Psoas muscle (tissue), 8 donors: ENCODE measurements at regions of chr6 and their contacts with region 1.

Region 1: GRCh38 chr6:56708810-56709597 is 66.3 kb upstream of the DST start:
- DNase-seq: no peak
- ATAC-seq: peak in 2 of 4 donors; percentile 25 to 51
- H3K4me3 ChIP-seq: no peak overlapping the region
- H3K27ac ChIP-seq: peak overlapping the region; percentile 38
- H3K4me1 ChIP-seq: peaks cover 40% of the 10 kb centered on the region
- H3K27me3 ChIP-seq: no peaks in the 10 kb centered on the region
- CTCF ChIP-seq: peak; percentile 70

Region 2: DNA sequence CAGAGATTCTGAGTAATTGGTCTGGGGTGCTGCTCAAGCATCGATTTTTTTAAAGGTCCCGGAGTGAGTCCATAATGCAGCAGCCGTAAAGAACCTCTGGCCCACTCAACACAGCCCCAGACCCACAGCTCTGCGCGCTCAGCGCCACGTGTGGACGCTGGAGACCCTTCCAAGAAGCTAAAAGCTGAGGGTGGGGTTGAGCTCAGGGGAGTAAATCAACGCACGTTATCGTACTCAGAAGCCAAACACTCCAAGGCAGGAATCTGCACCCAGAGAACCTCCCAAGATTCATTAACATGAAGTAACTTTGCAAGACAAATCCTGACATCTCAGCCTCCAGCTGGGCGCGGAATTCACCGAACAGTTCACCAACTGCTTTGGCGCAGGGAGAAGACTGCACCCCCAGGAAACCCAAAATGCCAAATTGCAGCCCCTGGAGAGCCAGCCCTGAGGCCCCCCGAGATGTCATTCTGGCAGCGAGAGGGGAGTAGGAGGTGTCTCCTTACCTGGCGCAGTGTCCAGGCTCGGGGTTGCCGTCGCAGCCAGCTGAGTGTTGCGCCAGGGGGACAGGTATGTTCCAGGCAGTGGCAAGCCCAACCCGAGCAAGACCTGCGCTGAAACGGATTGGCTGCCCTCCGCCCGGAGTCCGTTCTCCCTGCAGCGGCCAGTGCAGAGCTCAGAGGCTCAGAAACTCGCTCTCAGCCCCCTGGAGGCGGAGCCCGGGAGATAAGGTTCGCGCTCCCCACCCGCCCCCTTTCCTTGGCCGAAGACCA is 461.9 kb before region 1 on chr6 and contains the start of gene COL21A1:
- intact Hi-C with region 1: no loop called
- DNase-seq: peak; percentile 41 to 58
- ATAC-seq: peak; percentile 53 to 85 (median 82)
- H3K4me3 ChIP-seq: peak within 1 kb of the TSS; percentile 63
- H3K27ac ChIP-seq: no peak within 1 kb of the TSS
- H3K4me1 ChIP-seq: no peaks in the 10 kb centered on the region
- H3K27me3 ChIP-seq: no peaks in the 10 kb centered on the region
- CTCF ChIP-seq: no peak
- total RNA-seq, gene COL21A1: 0.47 to 7.1 (median 1.0) TPM

Region 3: DNA sequence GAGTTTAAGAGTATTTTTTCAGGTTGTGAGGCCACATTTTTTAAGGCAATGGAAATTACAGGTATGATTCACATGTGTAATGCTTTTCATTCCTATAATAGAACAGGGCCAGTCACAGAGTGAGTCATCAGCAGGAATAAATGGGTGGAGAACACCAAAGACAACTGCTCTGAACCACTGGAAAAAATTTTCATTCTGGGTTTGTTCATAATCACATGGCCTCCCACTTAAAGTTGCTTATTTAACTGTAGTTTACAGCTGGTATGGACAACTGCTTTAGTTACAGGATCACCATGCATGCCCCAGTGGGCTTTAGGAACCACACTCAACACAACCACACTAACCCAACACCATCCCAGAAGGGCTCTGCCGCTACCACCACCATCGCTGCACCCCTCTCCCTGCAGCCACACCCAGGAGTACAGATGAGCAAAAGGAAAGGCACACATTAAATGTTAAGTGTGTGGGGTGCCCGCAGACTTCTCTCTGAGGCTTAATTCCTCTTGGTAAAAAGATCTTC is 40.7 kb after region 1 on chr6:
- intact Hi-C with region 1: loop called in 1 of 2 experiments (anchors 5 kb)
- DNase-seq: no peak
- ATAC-seq: peak; percentile 70 to 83 (median 79)
- H3K4me3 ChIP-seq: no peak overlapping the region
- H3K27ac ChIP-seq: peak overlapping the region; percentile 71
- H3K4me1 ChIP-seq: peaks cover 59% of the 10 kb centered on the region
- H3K27me3 ChIP-seq: no peaks in the 10 kb centered on the region
- CTCF ChIP-seq: no peak

Region 4: GRCh38 chr6:56764081-56764566 is 55.1 kb after region 1 on chr6:
- intact Hi-C with region 1: loop called in 1 of 2 experiments (anchors 5 kb)
- DNase-seq: no peak
- ATAC-seq: peak; percentile 41 to 69 (median 58)
- H3K4me3 ChIP-seq: no peak overlapping the region
- H3K27ac ChIP-seq: peak overlapping the region; percentile 78
- H3K4me1 ChIP-seq: peaks cover 64% of the 10 kb centered on the region
- H3K27me3 ChIP-seq: no peaks in the 10 kb centered on the region
- CTCF ChIP-seq: peak; percentile 31

Region 5: GRCh38 chr6:56851541-56852259 is 142.7 kb after region 1 on chr6:
- intact Hi-C with region 1: loop called (anchors 1 to 5 kb)
- DNase-seq: peak in 1 of 2 donors; percentile 22
- ATAC-seq: peak; percentile 80 to 94 (median 90)
- H3K4me3 ChIP-seq: peak overlapping the region; percentile 63
- H3K27ac ChIP-seq: peak overlapping the region; percentile 34
- H3K4me1 ChIP-seq: peaks cover 18% of the 10 kb centered on the region
- H3K27me3 ChIP-seq: no peaks in the 10 kb centered on the region
- CTCF ChIP-seq: peak; percentile 65